CD8-positive, alpha-beta T cell (primary cell): ENCODE measurements at regions of chr14 and their contacts with region 1.

Region 1: GRCh38 chr14:75427482-75428229 is at the start of gene JDP2:
- DNase-seq: peak in 8 of 9 experiments; percentile 12 to 68 (median 52)
- ATAC-seq: peak; percentile 70
- H3K4me3 ChIP-seq: peak within 1 kb of the TSS; percentile 41 to 46
- H3K4me3 Mint-ChIP-seq: peak within 1 kb of the TSS; percentile 79
- H3K27ac ChIP-seq: no peak within 1 kb of the TSS
- H3K27ac Mint-ChIP-seq: no peak within 1 kb of the TSS
- H3K4me1 ChIP-seq: peaks cover 8% of the 10 kb centered on the region
- H3K4me1 Mint-ChIP-seq: no peaks in the 10 kb centered on the region
- H3K27me3 ChIP-seq: peaks cover 0 to 7% of the 10 kb centered on the region in 2 experiments
- H3K27me3 Mint-ChIP-seq: peaks cover 21% of the 10 kb centered on the region
- CTCF ChIP-seq: no peak
- total RNA-seq, gene JDP2: not detected

Region 2: GRCh38 chr14:75333606-75334548 is 93.8 kb before region 1 on chr14:
- CTCF ChIA-PET with region 1: no interaction called
- POLR2A ChIA-PET with region 1: no interaction called
- intact Hi-C with region 1: loop called (anchors 5 to 10 kb)
- DNase-seq: peak; percentile 20 to 83 (median 63)
- ATAC-seq: peak; percentile 94
- H3K4me3 ChIP-seq: peak overlapping the region; percentile 56 to 65
- H3K4me3 Mint-ChIP-seq: peak overlapping the region; percentile 87
- H3K27ac ChIP-seq: peak overlapping the region; percentile 71 to 85
- H3K27ac Mint-ChIP-seq: peak overlapping the region; percentile 96
- H3K4me1 ChIP-seq: peaks cover 18% of the 10 kb centered on the region
- H3K4me1 Mint-ChIP-seq: peaks cover 32% of the 10 kb centered on the region
- H3K27me3 ChIP-seq: no peaks in the 10 kb centered on the region
- H3K27me3 Mint-ChIP-seq: no peaks in the 10 kb centered on the region
- CTCF ChIP-seq: no peak

Region 3: DNA sequence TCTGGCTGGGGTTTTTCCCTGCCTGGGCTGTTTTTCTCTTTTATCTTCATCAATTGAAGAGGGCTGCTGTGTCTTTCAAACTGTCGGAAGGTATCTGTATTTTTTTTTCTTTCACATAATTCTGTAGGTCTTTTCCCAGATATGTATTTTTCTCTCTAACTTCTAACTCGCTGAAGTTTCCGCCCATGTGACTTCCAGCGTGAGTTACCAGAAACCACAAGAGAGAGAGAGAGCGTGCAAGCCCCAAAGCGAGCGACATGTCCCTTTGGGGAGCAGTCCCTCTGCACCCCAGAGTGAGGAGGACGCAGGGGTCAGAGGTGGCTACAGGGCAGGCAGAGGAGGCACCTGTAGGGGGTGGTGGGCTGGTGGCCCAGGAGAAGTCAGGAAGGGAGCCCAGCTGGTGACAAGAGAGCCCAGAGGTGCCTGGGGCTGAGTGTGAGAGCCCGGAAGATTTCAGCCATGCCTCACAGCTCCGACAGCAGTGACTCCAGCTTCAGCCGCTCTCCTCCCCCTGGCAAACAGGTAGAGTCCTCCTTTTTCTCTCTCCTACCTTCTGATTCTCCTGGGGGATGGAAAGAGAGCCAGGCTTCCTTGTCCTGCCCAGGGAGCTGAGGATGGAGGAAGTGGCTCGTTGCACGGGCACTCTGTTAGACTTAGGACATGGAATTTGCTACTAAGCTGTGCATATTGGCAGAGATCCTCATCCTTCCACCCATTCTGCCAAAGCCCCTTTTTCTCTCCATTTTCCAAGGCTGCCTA is 94.7 kb after region 1 on chr14 and contains the start of gene BATF:
- CTCF ChIA-PET with region 1: no interaction called
- POLR2A ChIA-PET with region 1: no interaction called
- intact Hi-C with region 1: no loop called
- DNase-seq: peak; percentile 37 to 90 (median 73)
- ATAC-seq: peak; percentile 77
- H3K4me3 ChIP-seq: peak within 1 kb of the TSS; percentile 75 to 79
- H3K4me3 Mint-ChIP-seq: peak within 1 kb of the TSS; percentile 98
- H3K27ac ChIP-seq: peak within 1 kb of the TSS; percentile 46 to 93
- H3K27ac Mint-ChIP-seq: peak within 1 kb of the TSS; percentile 93
- H3K4me1 ChIP-seq: peaks cover 53% of the 10 kb centered on the region
- H3K4me1 Mint-ChIP-seq: peaks cover 66% of the 10 kb centered on the region
- H3K27me3 ChIP-seq: no peaks in the 10 kb centered on the region
- H3K27me3 Mint-ChIP-seq: no peaks in the 10 kb centered on the region
- CTCF ChIP-seq: no peak
- total RNA-seq, gene BATF: 3.2 to 4.3 TPM